CD4-positive, alpha-beta T cell (primary cell): ENCODE measurements at regions of chr9 and their contacts with region 1.

Region 1: DNA sequence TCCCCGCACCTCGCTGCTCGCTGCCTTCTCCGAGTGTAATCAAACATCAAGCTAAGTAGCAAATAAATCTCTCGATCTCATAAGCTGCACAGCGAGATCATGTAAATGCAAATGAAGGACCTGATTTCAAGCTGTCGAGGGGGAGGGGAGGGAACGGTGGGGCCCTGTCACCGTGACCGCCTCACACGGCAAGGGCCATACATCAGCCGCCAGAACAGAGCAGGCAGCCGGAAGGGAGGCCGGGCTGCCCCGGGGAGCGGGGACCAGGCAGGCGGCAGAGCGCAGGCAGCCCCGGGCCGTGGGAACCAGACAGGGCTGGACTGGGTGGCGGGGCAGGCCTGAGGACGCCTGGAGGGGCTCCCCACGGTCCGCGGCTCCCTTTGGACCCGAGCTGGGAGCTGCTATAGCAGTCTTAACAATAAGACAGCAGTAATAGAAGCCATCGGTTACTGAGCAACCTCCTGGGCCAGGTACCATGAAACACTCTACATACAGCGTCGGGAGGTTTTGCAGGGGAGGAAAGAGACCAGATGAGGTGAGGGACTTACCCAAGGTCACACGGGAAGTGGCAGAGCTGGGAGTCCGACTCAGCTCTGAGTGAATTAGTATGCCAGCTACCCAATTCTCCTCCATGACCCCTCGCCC is 76.8 kb downstream of the CFAP77 start:
- DNase-seq: peak in 11 of 14 experiments; percentile 4 to 83 (median 28)
- ATAC-seq: peak; percentile 65
- H3K4me3 ChIP-seq: peak overlapping the region; percentile 35
- H3K4me3 Mint-ChIP-seq: peak overlapping the region; percentile 74
- H3K27ac ChIP-seq: no peak overlapping the region
- H3K27ac Mint-ChIP-seq: peak overlapping the region; percentile 32
- H3K4me1 ChIP-seq: peaks cover 29% of the 10 kb centered on the region
- H3K4me1 Mint-ChIP-seq: peaks cover 27% of the 10 kb centered on the region
- H3K27me3 ChIP-seq: peaks cover 18 to 30% of the 10 kb centered on the region in 2 experiments
- H3K27me3 Mint-ChIP-seq: peaks cover 64% of the 10 kb centered on the region
- CTCF ChIP-seq: no peak

Region 2: DNA sequence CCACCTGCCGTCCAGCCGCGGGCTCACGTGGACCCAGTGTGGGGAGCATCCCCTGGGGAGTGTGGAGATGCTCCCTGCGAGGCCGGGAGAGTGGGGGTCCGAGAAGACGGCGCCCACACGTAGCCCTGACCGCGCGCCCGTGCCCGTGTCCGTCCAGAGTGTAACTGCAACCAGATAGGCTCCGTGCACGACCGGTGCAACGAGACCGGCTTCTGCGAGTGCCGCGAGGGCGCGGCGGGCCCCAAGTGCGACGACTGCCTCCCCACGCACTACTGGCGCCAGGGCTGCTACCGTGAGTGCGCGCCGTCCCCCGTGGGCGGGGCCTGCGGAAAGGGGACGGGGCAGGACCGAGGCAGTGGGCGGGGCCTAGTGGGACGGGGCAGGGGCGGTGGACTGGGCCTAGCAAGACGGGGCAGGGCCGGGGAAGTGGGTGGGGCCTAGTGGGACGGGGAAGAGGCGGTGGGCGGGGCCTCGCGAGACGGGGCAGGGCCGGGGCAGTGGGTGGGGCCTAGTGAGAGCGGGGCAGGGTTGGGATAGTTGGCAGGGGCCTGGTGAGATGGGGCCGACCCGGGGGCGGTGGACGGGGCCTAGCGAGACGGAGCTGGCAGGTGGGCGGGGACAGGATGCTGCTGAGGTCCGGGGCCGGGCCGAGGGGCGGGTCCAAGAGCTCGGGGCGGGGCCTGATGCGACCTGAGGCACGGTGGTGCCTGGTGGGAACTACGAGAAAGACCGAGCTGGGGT is 245.9 kb before region 1 on chr9:
- CTCF ChIA-PET with region 1: no interaction called
- POLR2A ChIA-PET with region 1: no interaction called
- intact Hi-C with region 1: no loop called
- DNase-seq: peak; percentile 99 to 100 (median 100)
- ATAC-seq: peak; percentile 86
- H3K4me3 ChIP-seq: peak overlapping the region; percentile 74
- H3K4me3 Mint-ChIP-seq: peak overlapping the region; percentile 99
- H3K27ac ChIP-seq: no peak overlapping the region
- H3K27ac Mint-ChIP-seq: peak overlapping the region; percentile 94
- H3K4me1 ChIP-seq: peaks cover 39% of the 10 kb centered on the region
- H3K4me1 Mint-ChIP-seq: peaks cover 20% of the 10 kb centered on the region
- H3K27me3 ChIP-seq: peaks cover 2 to 6% of the 10 kb centered on the region in 2 experiments
- H3K27me3 Mint-ChIP-seq: peaks cover 4% of the 10 kb centered on the region
- CTCF ChIP-seq: no peak

Region 3: DNA sequence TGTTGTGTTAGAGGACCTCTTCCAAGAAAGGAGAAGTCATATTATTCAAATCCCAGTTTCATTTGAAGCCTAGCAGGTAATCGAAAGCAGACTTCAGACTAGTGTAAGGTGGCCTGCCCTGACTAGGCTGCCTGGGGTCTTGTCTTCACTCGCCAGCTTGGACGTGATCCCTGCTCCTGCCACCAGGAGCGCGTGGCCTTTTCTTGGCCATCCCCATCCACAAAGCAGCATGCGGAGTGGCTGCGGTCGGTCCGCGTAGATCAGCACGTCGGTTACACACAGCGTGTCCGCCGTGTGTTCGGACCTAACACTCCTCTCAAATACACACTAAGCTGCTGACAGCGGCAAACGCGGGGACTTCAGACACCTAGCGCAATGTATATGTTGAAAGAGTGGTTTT is 39.5 kb before region 1 on chr9:
- CTCF ChIA-PET with region 1: no interaction called
- POLR2A ChIA-PET with region 1: no interaction called
- intact Hi-C with region 1: loop called in 1 of 2 experiments (anchors 1 kb)
- DNase-seq: no peak
- ATAC-seq: no peak
- H3K4me3 ChIP-seq: no peak overlapping the region
- H3K4me3 Mint-ChIP-seq: no peak overlapping the region
- H3K27ac ChIP-seq: no peak overlapping the region
- H3K27ac Mint-ChIP-seq: no peak overlapping the region
- H3K4me1 ChIP-seq: no peaks in the 10 kb centered on the region
- H3K4me1 Mint-ChIP-seq: no peaks in the 10 kb centered on the region
- H3K27me3 ChIP-seq: peaks cover 8 to 10% of the 10 kb centered on the region in 2 experiments
- H3K27me3 Mint-ChIP-seq: peaks cover 70% of the 10 kb centered on the region
- CTCF ChIP-seq: no peak